Activated CD4-positive, alpha-beta T cell treated with anti-CD3 and anti-CD28 coated beads for 36 hours (primary cell): ENCODE measurements at regions of chr2 and their contacts with region 1.

Region 1: GRCh38 chr2:86775338-86775737 is 15.4 kb downstream of the CD8A start:
- DNase-seq: no peak
- ATAC-seq: no peak
- H3K4me3 Mint-ChIP-seq: no peak overlapping the region
- H3K27ac Mint-ChIP-seq: no peak overlapping the region
- H3K4me1 Mint-ChIP-seq: no peaks in the 10 kb centered on the region
- H3K27me3 Mint-ChIP-seq: no peaks in the 10 kb centered on the region

Region 2: DNA sequence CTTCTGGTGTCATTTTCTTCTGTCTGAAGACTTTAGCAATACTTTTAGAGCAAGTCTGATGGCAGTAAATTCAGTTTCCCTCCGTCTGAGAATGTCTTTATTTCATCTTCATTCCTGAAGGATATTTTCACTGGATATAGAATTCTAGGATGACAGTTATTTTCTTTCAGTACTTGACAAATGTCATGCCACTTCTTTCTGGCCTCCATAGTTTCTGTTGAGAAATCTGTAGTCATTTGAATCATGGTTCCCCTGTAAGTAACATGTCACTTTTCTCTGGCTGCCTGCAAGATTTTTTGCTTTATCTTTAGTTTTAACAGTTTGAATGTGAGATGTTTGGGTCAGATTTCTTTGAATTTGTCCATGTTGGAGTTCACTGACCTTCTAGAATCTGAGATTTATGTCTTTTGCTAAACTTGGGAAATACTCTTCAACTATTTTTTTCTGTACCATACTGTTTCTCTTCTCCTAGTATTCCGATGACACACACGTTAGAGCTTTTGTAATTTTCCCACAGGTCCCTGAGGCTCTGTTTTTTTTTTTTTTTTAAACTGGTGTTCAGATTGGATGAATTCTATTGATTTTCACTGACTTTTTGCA is 25.0 kb before region 1 on chr2:
- CTCF ChIA-PET with region 1: interaction called, 4 read pairs
- POLR2A ChIA-PET with region 1: no interaction called
- intact Hi-C with region 1: loop called in 1 of 2 experiments (anchors 2 kb)
- DNase-seq: no peak
- ATAC-seq: no peak
- H3K4me3 Mint-ChIP-seq: no peak overlapping the region
- H3K27ac Mint-ChIP-seq: no peak overlapping the region
- H3K4me1 Mint-ChIP-seq: peaks cover 34% of the 10 kb centered on the region
- H3K27me3 Mint-ChIP-seq: no peaks in the 10 kb centered on the region